ENCODE measurements at regions of chr3 and their contacts with region 1.

Region 1: DNA sequence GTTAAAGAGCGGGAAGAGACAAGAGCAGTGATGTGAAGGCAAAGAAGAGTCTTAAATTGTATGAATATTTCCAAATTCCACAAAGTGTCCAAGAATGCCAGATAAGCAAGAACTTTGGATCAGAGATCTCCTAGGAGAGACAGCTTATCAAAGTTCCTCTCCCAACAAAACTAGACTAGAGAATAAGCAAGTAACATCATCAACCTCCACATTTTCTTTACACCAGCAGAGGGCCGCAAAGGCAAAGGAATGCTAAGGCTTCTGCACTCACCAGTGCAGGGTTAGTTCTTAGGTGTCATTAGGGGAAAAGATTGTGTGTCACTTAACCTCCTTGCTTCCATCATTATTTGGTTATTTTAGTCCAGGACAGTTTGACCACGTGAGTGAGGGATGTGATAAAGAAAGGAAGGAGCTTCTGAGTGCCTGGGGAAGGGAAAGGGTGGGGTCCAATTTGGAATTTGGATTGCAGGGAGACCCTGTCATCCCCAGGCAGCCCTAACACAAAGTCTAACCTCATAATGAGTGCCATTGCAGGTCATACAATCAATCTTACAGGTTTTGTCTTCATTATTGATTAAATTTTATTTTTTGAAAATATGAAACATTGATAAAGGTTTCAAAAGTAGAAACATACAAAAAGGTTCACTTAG is 7.5 kb upstream of the CMTM6 start:
- DNase-seq: peak; percentile 79
- ATAC-seq: peak; percentile 93
- H3K4me3 Mint-ChIP-seq: no peak overlapping the region
- H3K27ac Mint-ChIP-seq: no peak overlapping the region
- H3K4me1 Mint-ChIP-seq: no peaks in the 10 kb centered on the region
- H3K27me3 Mint-ChIP-seq: no peaks in the 10 kb centered on the region

Region 2: DNA sequence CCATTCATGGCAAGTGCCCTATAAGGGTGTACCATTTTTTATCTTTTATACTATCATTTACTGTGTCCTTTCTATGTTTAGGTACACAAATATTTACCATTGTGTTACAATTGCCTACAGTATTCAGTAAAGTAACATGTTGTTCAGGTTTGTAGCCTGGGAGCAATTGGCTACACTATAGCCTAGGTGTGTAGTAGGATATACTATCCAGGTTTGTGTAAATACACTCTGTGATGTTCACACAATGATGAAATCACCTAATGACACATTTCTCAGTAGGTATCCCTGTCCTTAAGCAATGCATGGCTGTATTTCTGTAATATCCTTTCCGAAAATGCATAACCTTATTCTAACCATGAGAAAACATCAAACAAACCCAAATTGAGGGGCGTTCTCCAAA is 156.9 kb after region 1 on chr3:
- CTCF ChIA-PET with region 1: interaction called, 4 read pairs
- POLR2A ChIA-PET with region 1: no interaction called
- intact Hi-C with region 1: loop called (anchors 1 kb)
- DNase-seq: no peak
- ATAC-seq: no peak
- H3K4me3 Mint-ChIP-seq: no peak overlapping the region
- H3K27ac Mint-ChIP-seq: no peak overlapping the region
- H3K4me1 Mint-ChIP-seq: no peaks in the 10 kb centered on the region
- H3K27me3 Mint-ChIP-seq: no peaks in the 10 kb centered on the region

Region 3: GRCh38 chr3:32743934-32744333 is 233.7 kb after region 1 on chr3:
- CTCF ChIA-PET with region 1: no interaction called
- POLR2A ChIA-PET with region 1: no interaction called
- intact Hi-C with region 1: no loop called
- DNase-seq: no peak
- ATAC-seq: no peak
- H3K4me3 Mint-ChIP-seq: no peak overlapping the region
- H3K27ac Mint-ChIP-seq: no peak overlapping the region
- H3K4me1 Mint-ChIP-seq: no peaks in the 10 kb centered on the region
- H3K27me3 Mint-ChIP-seq: no peaks in the 10 kb centered on the region

Region 4: DNA sequence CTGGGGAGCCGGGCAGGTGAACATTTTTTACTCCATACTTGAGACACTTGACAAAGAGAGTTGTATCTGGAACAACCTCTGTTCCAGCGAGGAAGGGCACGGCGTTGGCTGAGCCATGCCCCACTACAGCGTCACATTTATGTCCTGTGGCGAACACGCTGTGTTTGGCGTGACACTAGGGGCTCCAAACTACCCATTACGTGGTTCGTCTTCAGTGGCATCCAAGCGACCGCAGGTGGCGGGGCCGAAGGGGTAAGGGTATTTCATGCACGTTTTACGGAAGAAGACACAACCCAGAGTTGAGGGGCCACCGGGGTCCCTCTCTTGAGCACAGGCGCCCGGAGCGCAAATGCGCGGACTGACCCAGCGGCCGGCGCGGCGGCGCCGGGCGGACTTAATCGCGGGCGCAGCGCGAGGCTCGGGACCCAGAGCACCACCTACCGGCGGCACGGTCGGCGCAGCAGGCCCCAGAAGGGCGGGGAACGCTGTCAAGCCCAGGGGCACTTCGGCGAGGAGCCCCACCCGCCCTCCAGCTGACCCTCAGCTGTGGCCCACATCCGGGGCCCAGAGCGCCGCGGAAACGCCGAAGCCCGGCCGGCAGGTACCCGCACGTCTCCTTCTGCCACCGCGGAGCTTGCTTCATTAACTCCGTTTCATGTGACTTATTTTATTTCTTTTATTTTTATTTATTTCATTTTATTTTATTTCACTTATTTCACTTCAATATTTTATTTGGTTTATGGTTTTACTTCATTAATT is 271.2 kb after region 1 on chr3:
- CTCF ChIA-PET with region 1: no interaction called
- POLR2A ChIA-PET with region 1: no interaction called
- intact Hi-C with region 1: loop called (anchors 2 kb)
- DNase-seq: peak; percentile 84
- ATAC-seq: peak; percentile 86
- H3K4me3 Mint-ChIP-seq: peak overlapping the region; percentile 79
- H3K27ac Mint-ChIP-seq: no peak overlapping the region
- H3K4me1 Mint-ChIP-seq: peaks cover 10% of the 10 kb centered on the region
- H3K27me3 Mint-ChIP-seq: peaks cover 12% of the 10 kb centered on the region

Region 5: GRCh38 chr3:32934150-32934742 is 424.0 kb after region 1 on chr3:
- CTCF ChIA-PET with region 1: no interaction called
- POLR2A ChIA-PET with region 1: no interaction called
- intact Hi-C with region 1: loop called in 1 of 2 experiments (anchors 1 kb)
- DNase-seq: peak; percentile 48
- ATAC-seq: no peak
- H3K4me3 Mint-ChIP-seq: no peak overlapping the region
- H3K27ac Mint-ChIP-seq: no peak overlapping the region
- H3K4me1 Mint-ChIP-seq: no peaks in the 10 kb centered on the region
- H3K27me3 Mint-ChIP-seq: no peaks in the 10 kb centered on the region

Measured in activated CD4-positive, alpha-beta T cell treated with anti-CD3 and anti-CD28 coated beads for 36 hours (primary cell).